Vagina (tissue), 2 donors: ENCODE measurements at regions of chr19 and their contacts with region 1.

Region 1: DNA sequence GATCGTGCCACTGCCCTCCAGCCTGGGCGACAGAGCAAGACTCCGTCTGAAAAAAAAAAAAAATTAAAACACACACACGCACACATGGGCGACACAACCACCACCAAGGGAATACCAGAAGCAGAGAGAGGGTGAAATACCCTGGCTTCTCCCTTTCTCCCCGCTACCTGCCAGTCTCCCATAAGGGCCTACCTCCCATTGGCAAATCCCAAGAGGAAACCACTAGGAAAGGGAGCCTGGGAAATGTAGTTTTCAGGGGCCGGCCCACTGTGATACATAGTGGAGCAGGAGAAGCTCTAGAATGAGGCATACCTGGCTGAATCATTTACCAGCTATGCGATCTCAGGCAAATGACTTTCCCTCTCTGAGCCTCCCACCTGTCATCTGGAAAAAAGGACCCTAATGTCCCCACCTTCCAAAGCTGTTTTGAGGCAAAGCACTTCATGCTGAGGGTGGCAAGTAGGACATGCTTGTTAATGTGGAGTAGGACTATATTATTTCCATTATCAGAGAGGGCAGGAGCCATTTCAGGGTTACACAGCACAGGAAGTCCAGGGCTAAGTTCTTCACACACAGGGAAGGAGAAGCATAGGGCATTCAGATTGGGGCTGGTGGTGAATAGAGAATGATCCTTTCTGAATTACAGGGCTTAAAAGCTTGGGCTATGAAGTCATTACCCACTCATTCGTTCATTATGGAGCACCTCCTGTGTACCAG is 14.3 kb upstream of the HNRNPUL1 start:
- DNase-seq: no peak
- H3K4me3 ChIP-seq: no peak overlapping the region
- H3K27ac ChIP-seq: no peak overlapping the region
- H3K4me1 ChIP-seq: no peaks in the 10 kb centered on the region
- H3K27me3 ChIP-seq: no peaks in the 10 kb centered on the region
- CTCF ChIP-seq: no peak
- POLR2A ChIP-seq: no peak

Region 2: GRCh38 chr19:41206926-41207750 is 42.7 kb before region 1 on chr19:
- intact Hi-C with region 1: loop called (anchors 5 kb)
- DNase-seq: no peak
- H3K4me3 ChIP-seq: peak overlapping the region in 1 of 2 donors; percentile 7
- H3K27ac ChIP-seq: peak overlapping the region; percentile 75
- H3K4me1 ChIP-seq: peaks cover 11% of the 10 kb centered on the region
- H3K27me3 ChIP-seq: no peaks in the 10 kb centered on the region
- CTCF ChIP-seq: no peak
- POLR2A ChIP-seq: no peak